Transverse colon (tissue), 4 donors: ENCODE measurements at regions of chr17 and their contacts with region 1.

Region 1: DNA sequence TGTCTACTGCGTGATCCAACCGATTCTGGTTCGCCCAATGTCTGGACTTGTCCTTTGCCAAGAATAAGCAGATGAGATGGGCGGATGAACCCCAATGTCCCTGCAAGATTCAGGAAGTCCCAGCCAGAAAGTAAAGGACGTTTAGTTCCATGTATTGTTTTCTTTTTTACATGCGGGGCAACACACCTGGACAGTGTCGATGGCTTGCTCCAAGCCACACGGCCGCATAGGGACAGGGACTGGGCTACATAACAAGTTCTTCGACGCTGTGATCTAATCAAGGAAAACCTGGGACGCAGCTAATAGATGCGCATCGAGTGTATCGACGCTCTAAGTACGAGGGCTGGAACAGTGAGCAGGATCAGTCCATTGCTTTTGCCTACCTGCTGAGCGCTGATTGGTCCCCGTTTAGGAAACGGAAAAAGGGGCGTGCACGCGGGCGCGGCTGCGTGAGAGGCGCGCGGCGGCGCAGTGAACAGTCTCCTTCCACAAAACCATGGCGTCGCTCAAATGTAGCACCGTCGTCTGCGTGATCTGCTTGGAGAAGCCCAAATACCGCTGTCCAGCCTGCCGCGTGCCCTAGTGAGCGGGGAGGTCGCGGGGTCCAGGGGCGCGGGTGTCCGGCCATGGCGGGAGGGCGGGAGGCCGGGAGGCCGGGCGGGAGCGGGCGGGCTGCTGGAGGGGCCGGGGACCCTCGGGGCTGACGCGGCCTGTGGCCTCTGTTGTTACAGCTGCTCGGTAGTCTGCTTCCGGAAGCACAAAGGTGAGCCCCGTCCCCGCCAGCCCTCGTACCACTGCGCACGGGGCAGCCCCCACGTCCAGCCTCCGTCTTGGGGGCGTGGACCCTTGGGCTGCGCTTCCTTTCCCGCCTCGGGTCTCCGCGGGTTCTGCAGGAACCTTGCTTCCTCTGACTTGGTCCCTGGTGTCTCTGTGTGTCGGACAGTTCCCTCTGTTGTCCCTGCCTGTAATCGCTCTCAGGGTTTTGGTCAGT is at the start of gene ZNHIT3:
- DNase-seq: peak; percentile 94
- H3K4me3 ChIP-seq: peak within 1 kb of the TSS; percentile 54 to 97 (median 94)
- H3K27ac ChIP-seq: peak within 1 kb of the TSS; percentile 84 to 91 (median 88)
- H3K4me1 ChIP-seq: peaks cover 11 to 36% (median 28%) of the 10 kb centered on the region in 4 donors
- H3K27me3 ChIP-seq: peaks cover 11% of the 10 kb centered on the region
- CTCF ChIP-seq: no peak
- EP300 ChIP-seq: no peak
- POLR2A ChIP-seq: peak; percentile 66
- total RNA-seq, gene ZNHIT3: 6.7 to 38.6 (median 27.2) TPM

Region 2: DNA sequence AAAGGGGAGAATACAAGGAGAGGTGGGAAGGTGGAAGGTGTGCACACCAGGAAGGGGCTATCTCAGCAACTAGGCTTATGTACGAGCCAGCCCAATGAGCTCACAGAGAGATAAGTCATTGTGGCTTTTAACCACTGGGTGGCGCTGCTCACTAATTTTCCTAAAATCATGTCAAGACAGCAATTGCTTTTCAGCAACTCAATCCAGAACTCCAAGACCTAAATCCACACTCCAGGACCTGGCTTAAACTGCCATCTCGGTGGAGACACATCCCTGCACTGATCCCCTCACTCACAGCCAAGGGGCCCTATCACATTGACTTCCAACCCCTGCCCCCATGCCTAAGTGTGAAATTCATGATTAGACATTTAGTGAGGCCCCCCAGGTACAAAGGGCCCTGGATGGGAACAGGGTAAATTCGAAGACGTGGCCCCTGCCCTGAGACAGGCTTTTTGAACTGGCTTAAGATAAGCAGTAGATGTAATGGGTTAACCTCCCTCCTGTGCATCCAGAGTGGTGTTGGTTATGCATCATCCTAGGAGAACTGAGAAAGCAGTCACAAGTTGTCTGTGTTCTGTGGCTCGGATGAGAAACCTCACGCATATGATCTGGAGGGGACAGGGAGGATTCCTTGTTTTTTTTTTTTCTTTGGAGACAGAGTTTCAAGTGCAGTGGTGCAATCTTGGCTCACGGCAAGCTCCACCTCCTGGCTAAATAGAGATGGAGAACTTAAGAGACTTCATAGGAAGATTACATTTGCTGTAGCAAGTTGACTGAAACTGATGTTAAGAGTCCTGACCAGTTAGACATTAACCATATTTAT is 516.7 kb before region 1 on chr17:
- in situ Hi-C with region 1: loop called in 2 of 4 experiments (anchors 25 kb)
- intact Hi-C with region 1: loop called (anchors 5 kb)
- DNase-seq: peak; percentile 87
- H3K4me3 ChIP-seq: no peak overlapping the region
- H3K27ac ChIP-seq: peak overlapping the region in 1 of 4 donors; percentile 44
- H3K4me1 ChIP-seq: peaks cover 0 to 22% (median 16%) of the 10 kb centered on the region in 4 donors
- H3K27me3 ChIP-seq: no peaks in the 10 kb centered on the region
- CTCF ChIP-seq: peak; percentile 71 to 90 (median 81)
- EP300 ChIP-seq: no peak
- POLR2A ChIP-seq: no peak